Activated naive CD4-positive, alpha-beta T cell treated with anti-CD3 and anti-CD28 coated beads for 36 hours (primary cell): ENCODE measurements at regions of chr9 and their contacts with region 1.

Region 1: GRCh38 chr9:33225319-33226149 is 14.4 kb upstream of the SPINK4 start:
- DNase-seq: peak; percentile 89
- H3K4me3 Mint-ChIP-seq: no peak overlapping the region
- H3K27ac Mint-ChIP-seq: peak overlapping the region; percentile 4
- H3K4me1 Mint-ChIP-seq: peaks cover 15% of the 10 kb centered on the region
- H3K27me3 Mint-ChIP-seq: no peaks in the 10 kb centered on the region

Region 2: GRCh38 chr9:32589083-32589723 is 636.3 kb before region 1 on chr9:
- CTCF ChIA-PET with region 1: no interaction called
- intact Hi-C with region 1: loop called (anchors 1 kb)
- DNase-seq: no peak
- H3K4me3 Mint-ChIP-seq: no peak overlapping the region
- H3K27ac Mint-ChIP-seq: no peak overlapping the region
- H3K4me1 Mint-ChIP-seq: no peaks in the 10 kb centered on the region
- H3K27me3 Mint-ChIP-seq: peaks cover 16% of the 10 kb centered on the region

Region 3: GRCh38 chr9:33044127-33044673 is 181.3 kb before region 1 on chr9:
- CTCF ChIA-PET with region 1: interaction called, 4 read pairs
- intact Hi-C with region 1: loop called (anchors 1 kb)
- DNase-seq: peak; percentile 85
- H3K4me3 Mint-ChIP-seq: peak overlapping the region; percentile 71
- H3K27ac Mint-ChIP-seq: peak overlapping the region; percentile 72
- H3K4me1 Mint-ChIP-seq: peaks cover 17% of the 10 kb centered on the region
- H3K27me3 Mint-ChIP-seq: no peaks in the 10 kb centered on the region

Region 4: GRCh38 chr9:33159760-33160127 is 65.8 kb before region 1 on chr9:
- CTCF ChIA-PET with region 1: interaction called, 10 read pairs
- intact Hi-C with region 1: no loop called
- DNase-seq: peak; percentile 87
- H3K4me3 Mint-ChIP-seq: peak overlapping the region; percentile 64
- H3K27ac Mint-ChIP-seq: peak overlapping the region; percentile 97
- H3K4me1 Mint-ChIP-seq: peaks cover 92% of the 10 kb centered on the region
- H3K27me3 Mint-ChIP-seq: no peaks in the 10 kb centered on the region

Region 5: GRCh38 chr9:33193855-33194254 is 31.7 kb before region 1 on chr9:
- CTCF ChIA-PET with region 1: no interaction called
- intact Hi-C with region 1: no loop called
- DNase-seq: no peak
- H3K4me3 Mint-ChIP-seq: no peak overlapping the region
- H3K27ac Mint-ChIP-seq: no peak overlapping the region
- H3K4me1 Mint-ChIP-seq: no peaks in the 10 kb centered on the region
- H3K27me3 Mint-ChIP-seq: no peaks in the 10 kb centered on the region

Region 6: DNA sequence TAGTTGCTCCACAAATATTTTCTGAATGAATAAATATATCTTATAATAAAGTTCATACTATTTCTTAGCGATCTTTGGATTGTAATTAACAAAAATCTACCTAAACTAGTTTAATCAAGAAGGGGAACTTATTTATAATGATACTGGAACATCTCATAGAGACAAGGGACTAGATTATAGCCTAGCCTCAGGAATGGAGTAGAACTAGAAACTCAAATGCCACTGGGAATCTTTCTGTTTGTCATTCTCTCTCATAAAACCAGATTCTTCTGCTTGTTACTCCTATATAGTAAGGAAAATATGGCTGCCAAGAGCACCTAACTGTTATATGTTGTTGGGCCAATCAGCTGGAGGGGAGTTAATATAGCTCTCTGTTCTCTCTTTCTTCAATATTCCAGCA is 19.1 kb before region 1 on chr9:
- CTCF ChIA-PET with region 1: interaction called, 14 read pairs
- intact Hi-C with region 1: no loop called
- DNase-seq: no peak
- H3K4me3 Mint-ChIP-seq: no peak overlapping the region
- H3K27ac Mint-ChIP-seq: no peak overlapping the region
- H3K4me1 Mint-ChIP-seq: peaks cover 11% of the 10 kb centered on the region
- H3K27me3 Mint-ChIP-seq: no peaks in the 10 kb centered on the region

Region 7: GRCh38 chr9:33239921-33240320 is 14.4 kb after region 1 on chr9 and contains the start of gene SPINK4:
- CTCF ChIA-PET with region 1: interaction called, 16 read pairs
- intact Hi-C with region 1: no loop called
- DNase-seq: no peak
- H3K4me3 Mint-ChIP-seq: no peak within 1 kb of the TSS
- H3K27ac Mint-ChIP-seq: no peak within 1 kb of the TSS
- H3K4me1 Mint-ChIP-seq: no peaks in the 10 kb centered on the region
- H3K27me3 Mint-ChIP-seq: peaks cover 2% of the 10 kb centered on the region
- total RNA-seq, gene SPINK4: not detected

Region 8: DNA sequence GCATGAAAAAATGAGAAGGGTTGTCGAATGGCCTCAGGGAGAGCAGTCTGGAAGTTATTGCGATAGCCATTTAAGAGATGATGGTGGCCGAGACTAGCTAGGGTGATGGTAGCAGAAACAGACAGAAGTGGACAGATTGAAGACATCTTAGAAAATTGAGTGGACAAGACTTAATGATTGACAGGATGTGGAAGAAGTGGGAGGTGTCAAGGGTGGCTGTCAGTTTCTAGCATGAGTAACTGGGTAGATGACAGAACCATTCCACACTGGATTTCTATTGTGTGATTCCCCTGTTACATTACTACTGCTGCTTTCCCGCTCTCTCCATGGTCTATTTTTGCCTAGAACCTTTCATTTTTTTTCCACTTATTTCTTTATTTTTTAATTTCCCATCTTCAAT is 52.0 kb after region 1 on chr9:
- CTCF ChIA-PET with region 1: no interaction called
- intact Hi-C with region 1: no loop called
- DNase-seq: no peak
- H3K4me3 Mint-ChIP-seq: no peak overlapping the region
- H3K27ac Mint-ChIP-seq: peak overlapping the region; percentile 13
- H3K4me1 Mint-ChIP-seq: peaks cover 7% of the 10 kb centered on the region
- H3K27me3 Mint-ChIP-seq: no peaks in the 10 kb centered on the region